ENCODE measurements at regions of chr6 and their contacts with region 1.

Region 1: DNA sequence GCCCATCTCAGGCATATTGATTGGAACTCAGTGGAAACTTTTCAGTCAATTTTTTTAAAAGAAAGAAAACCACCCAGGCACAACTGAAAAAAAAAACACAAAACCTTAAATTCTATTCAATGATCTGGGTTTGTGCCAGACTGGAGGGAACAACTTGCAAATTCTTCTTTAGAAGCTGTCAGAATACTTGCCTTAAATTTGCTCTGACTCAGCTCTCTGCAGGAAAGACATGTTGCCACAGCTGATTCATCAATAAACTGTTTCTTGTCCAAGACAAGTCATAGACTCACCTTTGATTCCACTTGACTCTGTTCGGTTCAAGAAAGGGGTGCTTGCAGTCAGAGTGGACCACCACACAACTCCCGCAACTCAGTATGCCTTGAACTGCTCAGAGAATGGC is 117.8 kb upstream of the F13A1 start:
- DNase-seq: peak; percentile 53
- H3K4me3 Mint-ChIP-seq: no peak overlapping the region
- H3K27ac Mint-ChIP-seq: peak overlapping the region; percentile 32
- H3K4me1 Mint-ChIP-seq: peaks cover 29% of the 10 kb centered on the region
- H3K27me3 Mint-ChIP-seq: no peaks in the 10 kb centered on the region
- CTCF ChIP-seq: no peak

Region 2: DNA sequence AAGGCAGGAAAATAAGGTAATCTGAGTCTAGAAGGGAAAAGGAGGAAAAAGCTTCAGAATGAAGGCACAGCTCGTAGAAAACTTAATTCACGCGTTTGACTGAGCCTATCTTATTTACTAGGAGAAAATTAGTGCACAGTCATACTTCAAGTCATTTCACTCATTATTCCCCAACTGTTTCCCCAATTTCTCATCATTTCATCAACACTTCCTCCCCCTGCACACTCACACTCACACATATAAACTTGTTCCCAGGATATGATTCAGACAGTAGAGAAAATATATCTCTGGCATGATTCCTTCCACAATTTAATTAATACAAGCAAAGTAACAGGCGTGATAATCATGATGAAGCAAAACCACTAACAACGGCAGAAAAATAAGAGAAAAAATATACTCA is 23.4 kb before region 1 on chr6:
- CTCF ChIA-PET with region 1: interaction called, 3 read pairs
- POLR2A ChIA-PET with region 1: interaction called, 7 read pairs
- intact Hi-C with region 1: loop called (anchors 2 kb)
- DNase-seq: peak; percentile 42
- H3K4me3 Mint-ChIP-seq: no peak overlapping the region
- H3K27ac Mint-ChIP-seq: peak overlapping the region; percentile 33
- H3K4me1 Mint-ChIP-seq: peaks cover 35% of the 10 kb centered on the region
- H3K27me3 Mint-ChIP-seq: no peaks in the 10 kb centered on the region
- CTCF ChIP-seq: no peak

Region 3: GRCh38 chr6:6461138-6461537 is 22.9 kb after region 1 on chr6:
- CTCF ChIA-PET with region 1: interaction called, 3 read pairs
- POLR2A ChIA-PET with region 1: interaction called, 65 read pairs
- intact Hi-C with region 1: no loop called
- DNase-seq: no peak
- H3K4me3 Mint-ChIP-seq: no peak overlapping the region
- H3K27ac Mint-ChIP-seq: no peak overlapping the region
- H3K4me1 Mint-ChIP-seq: peaks cover 12% of the 10 kb centered on the region
- H3K27me3 Mint-ChIP-seq: no peaks in the 10 kb centered on the region
- CTCF ChIP-seq: no peak